Activated CD4-positive, alpha-beta memory T cell treated with anti-CD3 and anti-CD28 coated beads, Interleukin-2, amount 10 ng/mL, durations not matched to agents 7 days and 5 days (primary cell): ENCODE measurements at regions of chr19 and their contacts with region 1.

Region 1: DNA sequence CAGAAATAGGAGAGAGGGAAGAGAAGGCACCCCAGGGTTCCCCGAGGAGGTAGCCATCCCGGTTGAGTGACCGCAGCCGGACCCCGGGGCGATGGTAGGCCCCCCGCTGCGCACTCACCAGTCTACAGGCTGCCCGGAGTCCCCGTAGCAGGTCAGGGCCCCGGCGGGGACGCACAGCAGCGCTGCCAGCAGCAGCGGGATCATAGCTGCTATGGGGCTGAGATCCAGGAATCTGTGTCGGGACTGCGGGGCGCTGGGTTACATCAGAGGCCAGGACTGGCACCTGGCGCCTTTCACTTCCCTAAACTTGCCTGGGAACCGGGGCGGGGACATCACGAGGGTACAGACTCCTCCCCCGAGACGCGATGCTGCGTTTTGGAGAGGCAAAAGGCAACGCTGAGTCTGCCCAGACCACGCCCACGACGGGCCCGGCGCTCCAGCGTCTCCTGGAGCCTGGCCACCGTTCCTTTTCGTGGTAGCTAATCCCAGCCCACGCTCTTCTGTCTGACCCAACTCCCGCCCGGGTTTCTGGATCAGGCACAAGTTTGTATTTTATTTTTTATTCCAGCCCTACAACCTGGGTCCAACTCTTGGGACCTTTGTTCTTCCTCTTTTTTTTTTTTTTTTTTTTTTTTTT is at the start of gene DNASE2:
- DNase-seq: peak; percentile 94
- H3K4me3 Mint-ChIP-seq: peak within 1 kb of the TSS; percentile 83
- H3K27ac Mint-ChIP-seq: peak within 1 kb of the TSS; percentile 83
- H3K4me1 Mint-ChIP-seq: peaks cover 40% of the 10 kb centered on the region
- H3K27me3 Mint-ChIP-seq: no peaks in the 10 kb centered on the region
- total RNA-seq, gene DNASE2: 37.6 to 39.3 TPM

Region 2: GRCh38 chr19:12838182-12838885 is 43.0 kb before region 1 on chr19 and contains the start of gene MAST1:
- CTCF ChIA-PET with region 1: no interaction called
- POLR2A ChIA-PET with region 1: no interaction called
- DNase-seq: peak; percentile 61
- H3K4me3 Mint-ChIP-seq: peak within 1 kb of the TSS; percentile 51
- H3K27ac Mint-ChIP-seq: no peak within 1 kb of the TSS
- H3K4me1 Mint-ChIP-seq: peaks cover 41% of the 10 kb centered on the region
- H3K27me3 Mint-ChIP-seq: peaks cover 76% of the 10 kb centered on the region
- total RNA-seq, gene MAST1: 1.1 to 2.1 TPM

Region 3: DNA sequence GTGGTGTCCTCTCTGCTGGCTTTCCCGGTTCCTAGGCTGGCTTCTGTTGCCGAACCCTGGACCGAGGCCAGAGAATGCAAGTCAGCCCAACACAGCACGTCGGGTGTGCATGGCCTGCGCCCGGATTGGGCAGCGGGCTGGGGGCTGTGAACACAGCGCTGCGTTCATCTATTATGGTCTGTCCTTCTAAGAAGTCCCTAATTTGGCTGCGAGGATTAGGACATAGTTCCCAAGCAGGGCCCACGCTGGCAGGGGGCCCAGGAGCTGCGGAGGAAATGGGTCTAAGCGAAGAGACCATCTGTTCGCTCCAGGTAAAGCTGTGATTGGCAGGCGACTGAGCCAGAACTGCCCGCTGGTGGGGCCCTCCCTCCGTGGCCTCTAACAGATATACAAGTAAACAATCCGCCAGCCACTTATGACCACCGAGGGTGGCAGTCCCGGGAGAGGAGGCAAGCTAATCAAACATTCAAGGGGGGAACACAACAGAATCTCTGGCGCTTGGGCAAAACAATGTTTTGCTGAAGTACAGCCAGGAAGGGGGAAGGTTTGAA is 31.8 kb after region 1 on chr19:
- CTCF ChIA-PET with region 1: interaction called, 16 read pairs
- POLR2A ChIA-PET with region 1: interaction called, 5 read pairs
- DNase-seq: no peak
- H3K4me3 Mint-ChIP-seq: no peak overlapping the region
- H3K27ac Mint-ChIP-seq: no peak overlapping the region
- H3K4me1 Mint-ChIP-seq: peaks cover 30% of the 10 kb centered on the region
- H3K27me3 Mint-ChIP-seq: no peaks in the 10 kb centered on the region